ENCODE measurements at regions of chr12 and their contacts with region 1.

Region 1: DNA sequence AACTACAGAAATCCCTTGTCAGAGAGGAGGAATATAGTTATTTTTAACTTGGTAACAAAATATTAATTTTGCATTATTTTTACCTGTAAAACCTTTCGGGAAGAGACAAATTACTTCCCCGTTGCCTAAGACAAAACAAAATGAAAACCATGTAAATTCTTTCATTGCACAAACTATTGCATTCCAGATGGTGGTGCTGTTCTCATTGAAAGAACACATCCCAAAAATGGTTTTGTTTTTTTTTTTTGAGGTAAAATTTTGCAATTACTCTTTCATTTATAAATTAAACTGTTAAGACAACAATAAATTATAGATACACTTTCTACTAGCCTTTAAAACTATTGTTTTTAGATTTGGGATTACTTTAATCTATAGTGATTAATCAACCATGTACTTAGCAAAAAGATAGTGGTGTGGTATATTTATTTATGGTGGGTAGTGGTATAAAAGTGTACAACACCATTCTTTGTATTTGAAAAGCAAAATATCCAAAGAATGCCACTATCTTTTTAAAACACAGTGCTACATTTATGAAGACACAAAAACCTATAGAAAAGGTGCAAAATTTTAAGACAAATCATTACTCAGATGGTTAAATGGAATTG is 115.5 kb downstream of the SLC38A1 start:
- DNase-seq: no peak
- ATAC-seq: no peak
- H3K4me3 Mint-ChIP-seq: peak overlapping the region; percentile 4
- H3K27ac Mint-ChIP-seq: no peak overlapping the region
- H3K4me1 Mint-ChIP-seq: peaks cover 35% of the 10 kb centered on the region
- H3K27me3 Mint-ChIP-seq: peaks cover 1% of the 10 kb centered on the region
- CTCF ChIP-seq: no peak

Region 2: GRCh38 chr12:45644541-45644940 is 508.8 kb before region 1 on chr12:
- CTCF ChIA-PET with region 1: no interaction called
- POLR2A ChIA-PET with region 1: no interaction called
- intact Hi-C with region 1: no loop called
- DNase-seq: no peak
- ATAC-seq: no peak
- H3K4me3 Mint-ChIP-seq: no peak overlapping the region
- H3K27ac Mint-ChIP-seq: no peak overlapping the region
- H3K4me1 Mint-ChIP-seq: peaks cover 7% of the 10 kb centered on the region
- H3K27me3 Mint-ChIP-seq: peaks cover 7% of the 10 kb centered on the region
- CTCF ChIP-seq: no peak

Region 3: GRCh38 chr12:46071769-46072624 is 81.4 kb before region 1 on chr12:
- CTCF ChIA-PET with region 1: interaction called, 3 read pairs
- POLR2A ChIA-PET with region 1: no interaction called
- intact Hi-C with region 1: loop called (anchors 2 kb)
- DNase-seq: peak; percentile 39
- ATAC-seq: peak; percentile 96
- H3K4me3 Mint-ChIP-seq: no peak overlapping the region
- H3K27ac Mint-ChIP-seq: peak overlapping the region; percentile 61
- H3K4me1 Mint-ChIP-seq: peaks cover 12% of the 10 kb centered on the region
- H3K27me3 Mint-ChIP-seq: peaks cover 4% of the 10 kb centered on the region
- CTCF ChIP-seq: peak; percentile 88

Region 4: GRCh38 chr12:46303039-46303666 is 149.8 kb after region 1 on chr12:
- CTCF ChIA-PET with region 1: interaction called, 22 read pairs
- POLR2A ChIA-PET with region 1: no interaction called
- intact Hi-C with region 1: loop called (anchors 1 kb)
- DNase-seq: no peak
- ATAC-seq: peak; percentile 74
- H3K4me3 Mint-ChIP-seq: no peak overlapping the region
- H3K27ac Mint-ChIP-seq: peak overlapping the region; percentile 20
- H3K4me1 Mint-ChIP-seq: peaks cover 31% of the 10 kb centered on the region
- H3K27me3 Mint-ChIP-seq: no peaks in the 10 kb centered on the region
- CTCF ChIP-seq: peak; percentile 30

Region 5: GRCh38 chr12:46661110-46661845 is 507.9 kb after region 1 on chr12:
- CTCF ChIA-PET with region 1: interaction called, 8 read pairs
- POLR2A ChIA-PET with region 1: no interaction called
- intact Hi-C with region 1: loop called (anchors 1 kb)
- DNase-seq: no peak
- ATAC-seq: peak; percentile 94
- H3K4me3 Mint-ChIP-seq: peak overlapping the region; percentile 3
- H3K27ac Mint-ChIP-seq: no peak overlapping the region
- H3K4me1 Mint-ChIP-seq: peaks cover 31% of the 10 kb centered on the region
- H3K27me3 Mint-ChIP-seq: no peaks in the 10 kb centered on the region
- CTCF ChIP-seq: no peak

Region 6: GRCh38 chr12:46983393-46984266 is 830.3 kb after region 1 on chr12:
- CTCF ChIA-PET with region 1: interaction called, 4 read pairs
- POLR2A ChIA-PET with region 1: no interaction called
- intact Hi-C with region 1: loop called (anchors 2 kb)
- DNase-seq: no peak
- ATAC-seq: peak; percentile 56
- H3K4me3 Mint-ChIP-seq: no peak overlapping the region
- H3K27ac Mint-ChIP-seq: no peak overlapping the region
- H3K4me1 Mint-ChIP-seq: peaks cover 7% of the 10 kb centered on the region
- H3K27me3 Mint-ChIP-seq: peaks cover 14% of the 10 kb centered on the region
- CTCF ChIP-seq: peak; percentile 28